Heart left ventricle (tissue), 16 donors: ENCODE measurements at regions of chr13 and their contacts with region 1.

Region 1: GRCh38 chr13:107650081-107650701 is 565.1 kb downstream of the LIG4 start:
- DNase-seq: peak; percentile 12 to 63 (median 27)
- ATAC-seq: no peak
- H3K4me3 ChIP-seq: no peak overlapping the region
- H3K27ac ChIP-seq: no peak overlapping the region
- H3K4me1 ChIP-seq: no peaks in the 10 kb centered on the region
- H3K27me3 ChIP-seq: no peaks in the 10 kb centered on the region
- CTCF ChIP-seq: peak; percentile 48 to 74 (median 62)
- POLR2A ChIP-seq: no peak

Region 2: DNA sequence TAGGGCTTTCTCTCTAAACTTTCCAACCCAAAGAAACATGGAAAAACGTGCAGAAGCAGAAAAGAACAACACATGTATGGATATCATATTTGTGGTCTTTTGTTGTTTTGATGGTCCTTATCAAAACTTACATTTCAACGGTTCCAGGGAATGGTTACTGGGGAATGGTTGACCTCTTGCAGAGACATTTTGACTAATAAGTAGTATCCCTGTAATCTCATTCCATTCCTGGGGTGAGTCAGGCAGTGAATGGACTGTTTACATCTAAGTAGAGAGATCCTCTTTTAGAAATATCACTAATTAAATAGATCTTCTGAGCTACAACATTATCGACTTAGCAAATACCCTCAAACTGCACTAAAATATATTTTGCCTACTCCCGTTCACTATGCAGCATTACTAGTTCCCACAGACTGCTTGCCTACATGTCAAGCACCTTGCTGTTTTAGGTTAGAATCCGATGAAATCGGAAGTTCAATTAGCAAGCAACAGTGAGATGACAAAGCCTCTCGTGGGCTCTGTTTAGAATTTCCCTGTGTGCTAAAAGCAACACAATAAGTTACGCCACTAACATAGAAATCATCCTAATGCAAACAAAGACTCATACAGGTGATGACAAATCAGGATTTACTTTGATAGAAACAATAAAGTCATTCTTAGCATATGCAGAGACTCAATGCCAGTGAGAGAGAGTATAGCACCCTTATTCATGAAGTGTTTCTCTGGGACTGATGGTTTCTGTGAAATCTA is 284.6 kb before region 1 on chr13:
- intact Hi-C with region 1: loop called in 1 of 10 experiments (anchors 10 kb)
- DNase-seq: no peak
- ATAC-seq: no peak
- H3K4me3 ChIP-seq: no peak overlapping the region
- H3K27ac ChIP-seq: no peak overlapping the region
- H3K4me1 ChIP-seq: no peaks in the 10 kb centered on the region
- H3K27me3 ChIP-seq: no peaks in the 10 kb centered on the region
- CTCF ChIP-seq: no peak
- POLR2A ChIP-seq: no peak

Region 3: DNA sequence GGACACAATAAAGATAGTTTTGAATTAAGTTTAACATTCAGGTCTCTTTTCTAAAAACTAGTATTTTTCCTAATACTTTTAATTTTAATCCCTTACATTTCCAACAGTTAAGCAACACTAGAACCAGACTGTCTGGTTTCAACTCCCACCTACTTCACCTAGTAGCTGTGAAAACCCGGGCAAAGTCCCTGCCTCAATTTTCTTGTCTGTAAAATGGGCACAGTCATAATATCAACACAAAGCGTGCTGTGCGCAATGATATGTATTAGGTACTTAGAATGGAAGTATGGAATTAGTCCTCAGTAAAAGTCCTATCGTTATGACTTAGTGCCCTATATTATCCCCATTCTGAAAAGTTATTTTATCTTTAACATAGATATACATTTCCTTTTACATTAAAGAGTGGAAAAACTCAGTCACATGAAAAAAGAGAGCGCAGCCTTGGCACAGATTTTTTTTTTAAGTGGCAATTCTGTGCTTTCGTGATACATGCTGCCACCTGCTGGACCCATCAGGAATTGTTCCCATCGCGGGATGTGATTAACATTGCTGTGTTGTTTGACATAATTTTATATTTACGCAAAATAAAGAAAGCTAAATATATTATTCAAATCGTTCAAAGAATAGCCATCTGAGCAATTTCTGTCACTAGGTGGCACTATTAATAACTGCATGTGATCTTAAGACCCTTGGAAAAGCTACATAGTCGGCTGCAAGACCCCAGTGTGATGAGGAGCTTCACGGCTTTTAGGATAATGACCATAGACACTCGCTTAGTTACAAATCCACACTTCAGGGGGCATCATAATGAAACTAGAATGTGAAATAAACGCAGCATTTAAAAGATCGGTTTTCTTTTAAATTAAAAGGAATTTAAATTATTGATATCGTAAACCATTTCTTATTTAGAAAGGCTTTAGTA is 505.3 kb after region 1 on chr13:
- intact Hi-C with region 1: loop called in 1 of 10 experiments (anchors 10 kb)
- DNase-seq: peak in 4 of 5 donors; percentile 22 to 41 (median 33)
- ATAC-seq: peak in 1 of 4 donors; percentile 41
- H3K4me3 ChIP-seq: no peak overlapping the region
- H3K27ac ChIP-seq: no peak overlapping the region
- H3K4me1 ChIP-seq: no peaks in the 10 kb centered on the region
- H3K27me3 ChIP-seq: no peaks in the 10 kb centered on the region
- CTCF ChIP-seq: peak; percentile 68 to 92 (median 84)
- POLR2A ChIP-seq: no peak